Dorsolateral prefrontal cortex (tissue), 120 donors: ENCODE measurements at regions of chr4 and their contacts with region 1.

Region 1: GRCh38 chr4:8428293-8429097 is 12.0 kb downstream of the ACOX3 start:
- DNase-seq: peak; percentile 79 to 98 (median 86)
- H3K4me3 ChIP-seq: peak overlapping the region; percentile 50 to 96 (median 88)
- H3K27ac ChIP-seq: peak overlapping the region in 49 of 59 donors; percentile 19 to 89 (median 70)
- H3K27me3 ChIP-seq: no peaks in the 10 kb centered on the region
- CTCF ChIP-seq: peak in 22 of 56 donors; percentile 6 to 44 (median 15)

Region 2: DNA sequence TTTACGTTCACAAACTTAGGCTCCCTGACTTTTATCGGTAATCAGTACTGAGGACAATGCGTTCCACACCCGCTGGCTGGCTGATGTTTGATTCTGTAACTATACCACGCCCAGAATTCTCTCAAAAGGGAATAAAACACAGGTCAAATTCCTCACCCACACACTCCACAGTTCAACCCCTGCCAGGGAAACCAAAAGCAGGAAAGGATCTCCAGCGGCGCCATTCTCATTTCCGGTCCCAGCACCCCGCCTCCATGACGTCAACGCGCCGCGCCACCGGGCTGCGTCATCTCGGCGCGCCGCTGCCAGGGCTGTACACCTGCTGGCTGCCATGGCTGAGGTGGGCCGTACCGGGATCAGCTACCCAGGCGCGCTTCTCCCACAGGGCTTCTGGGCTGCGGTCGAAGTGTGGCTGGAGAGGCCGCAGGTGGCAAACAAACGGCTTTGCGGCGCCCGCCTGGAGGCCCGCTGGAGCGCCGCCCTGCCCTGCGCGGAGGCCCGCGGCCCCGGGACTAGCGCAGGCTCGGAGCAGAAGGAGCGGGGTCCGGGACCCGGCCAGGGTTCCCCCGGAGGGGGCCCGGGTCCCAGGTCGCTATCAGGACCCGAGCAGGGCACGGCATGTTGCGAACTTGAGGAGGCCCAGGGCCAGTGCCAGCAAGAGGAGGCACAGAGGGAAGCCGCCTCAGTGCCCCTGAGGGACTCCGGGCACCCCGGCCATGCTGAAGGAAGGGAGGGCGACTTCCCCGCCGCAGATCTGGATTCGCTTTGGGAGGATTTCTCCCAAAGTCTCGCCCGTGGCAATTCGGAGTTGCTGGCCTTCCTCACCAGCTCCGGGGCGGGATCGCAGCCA is 12.2 kb after region 1 on chr4 and contains the starts of genes ACOX3 and TRMT44:
- intact Hi-C with region 1: loop called in 1 of 2 experiments (anchors 1 kb)
- DNase-seq: peak; percentile 84 to 96 (median 90)
- H3K4me3 ChIP-seq: peak within 1 kb of the TSS; percentile 60 to 100 (median 98)
- H3K27ac ChIP-seq: peak within 1 kb of the TSS; percentile 1 to 96 (median 84)
- H3K27me3 ChIP-seq: no peaks in the 10 kb centered on the region
- CTCF ChIP-seq: peak in 44 of 56 donors; percentile 10 to 61 (median 36)
- total RNA-seq, gene ACOX3: 22.8 to 47.3 (median 34.4) TPM
- total RNA-seq, gene TRMT44: 24.4 to 65.0 (median 40.3) TPM